Psoas muscle (tissue), 8 donors: ENCODE measurements at regions of chr13 and their contacts with region 1.

Region 1: DNA sequence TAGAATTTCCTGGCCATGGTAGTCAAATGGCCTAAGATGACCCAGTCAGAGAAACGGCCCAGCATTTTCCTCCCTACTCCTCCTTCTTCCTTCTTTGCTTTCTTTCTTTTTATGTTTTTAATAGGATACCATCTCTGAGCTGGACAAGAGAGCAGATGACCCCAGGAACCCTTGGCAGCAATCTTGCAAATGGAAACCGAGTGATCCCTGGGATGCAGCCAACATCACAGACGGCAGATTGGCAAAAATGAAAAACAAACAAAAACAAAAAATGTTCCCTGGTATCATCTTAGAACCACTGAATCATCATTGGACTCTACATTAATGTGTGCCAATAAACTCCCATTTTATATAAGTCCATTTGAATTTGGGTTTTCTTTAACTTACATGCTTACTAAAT is 424.4 kb downstream of the FGF14 start:
- DNase-seq: no peak
- ATAC-seq: no peak
- H3K4me3 ChIP-seq: no peak overlapping the region
- H3K27ac ChIP-seq: no peak overlapping the region
- H3K4me1 ChIP-seq: no peaks in the 10 kb centered on the region
- H3K27me3 ChIP-seq: no peaks in the 10 kb centered on the region
- CTCF ChIP-seq: no peak

Region 2: GRCh38 chr13:102091231-102091630 is 113.8 kb after region 1 on chr13:
- intact Hi-C with region 1: loop called in 1 of 2 experiments (anchors 10 kb)
- DNase-seq: no peak
- ATAC-seq: peak in 2 of 4 donors; percentile 54 to 72
- H3K4me3 ChIP-seq: no peak overlapping the region
- H3K27ac ChIP-seq: peak overlapping the region; percentile 53
- H3K4me1 ChIP-seq: no peaks in the 10 kb centered on the region
- H3K27me3 ChIP-seq: no peaks in the 10 kb centered on the region
- CTCF ChIP-seq: no peak